Activated CD4-positive, alpha-beta memory T cell treated with anti-CD3 and anti-CD28 coated beads for 36 hours (primary cell): ENCODE measurements at regions of chr6 and their contacts with region 1.

Region 1: DNA sequence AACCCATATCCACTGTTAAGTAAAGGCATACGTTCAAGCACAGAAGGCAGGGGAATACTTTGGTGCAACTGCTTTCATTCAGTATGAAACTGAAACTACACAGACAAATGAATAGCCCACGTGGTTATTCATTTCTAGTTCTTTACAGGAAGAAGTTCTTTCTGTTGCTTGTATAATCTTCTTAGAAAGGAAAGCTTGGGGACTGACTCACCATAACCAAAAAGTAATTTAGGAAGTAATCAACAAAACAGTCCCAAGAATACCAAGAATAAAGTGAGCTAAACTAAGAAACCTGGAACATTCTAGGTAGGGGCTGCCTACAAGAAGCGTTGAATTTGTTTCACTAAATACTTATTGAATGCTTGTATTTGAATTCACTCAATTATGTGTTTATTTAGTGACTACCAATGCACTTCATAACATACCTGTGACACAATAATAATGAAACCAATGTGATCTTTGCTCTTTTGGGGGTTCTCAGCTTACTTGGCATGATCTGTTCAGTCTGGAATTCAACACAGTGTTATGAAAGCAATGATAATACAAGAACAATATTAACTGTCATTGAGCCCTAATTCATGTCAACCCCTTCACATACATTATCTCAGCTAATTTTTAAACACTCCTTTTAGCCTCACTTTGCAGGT is 25.1 kb upstream of the KIAA0408 start:
- DNase-seq: no peak
- H3K4me3 Mint-ChIP-seq: no peak overlapping the region
- H3K27ac Mint-ChIP-seq: peak overlapping the region; percentile 68
- H3K4me1 Mint-ChIP-seq: peaks cover 28% of the 10 kb centered on the region
- H3K27me3 Mint-ChIP-seq: no peaks in the 10 kb centered on the region

Region 2: DNA sequence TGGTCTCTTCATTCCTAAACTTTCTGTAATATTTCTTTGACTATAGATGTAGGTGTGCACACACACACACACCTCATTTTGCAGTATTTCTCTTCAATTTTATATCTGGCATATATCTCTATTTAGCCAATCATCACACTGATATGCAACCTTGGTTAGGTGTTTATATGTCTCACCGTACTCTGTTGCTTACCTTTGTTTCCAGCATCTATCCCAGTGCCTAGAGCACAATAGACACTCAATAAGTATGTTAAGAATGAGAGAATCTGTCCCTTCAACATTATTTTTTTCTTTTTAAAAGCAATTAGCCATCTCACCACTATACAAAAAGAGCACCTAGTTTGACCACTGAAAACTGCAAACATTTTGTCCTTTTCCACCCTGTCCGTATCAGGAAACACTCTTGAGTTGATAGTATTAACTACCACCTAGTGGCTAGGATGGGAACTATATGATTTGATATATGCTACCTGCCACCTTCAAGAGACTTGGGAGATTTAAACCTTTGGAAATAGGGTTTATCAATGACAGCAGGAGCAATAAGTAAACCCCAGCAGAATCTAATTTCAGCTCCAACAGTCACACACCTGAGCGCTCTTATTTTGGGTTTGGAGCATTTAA is 414.6 kb before region 1 on chr6:
- CTCF ChIA-PET with region 1: no interaction called
- POLR2A ChIA-PET with region 1: no interaction called
- intact Hi-C with region 1: no loop called
- DNase-seq: no peak
- H3K4me3 Mint-ChIP-seq: no peak overlapping the region
- H3K27ac Mint-ChIP-seq: no peak overlapping the region
- H3K4me1 Mint-ChIP-seq: no peaks in the 10 kb centered on the region
- H3K27me3 Mint-ChIP-seq: peaks cover 1% of the 10 kb centered on the region

Region 3: DNA sequence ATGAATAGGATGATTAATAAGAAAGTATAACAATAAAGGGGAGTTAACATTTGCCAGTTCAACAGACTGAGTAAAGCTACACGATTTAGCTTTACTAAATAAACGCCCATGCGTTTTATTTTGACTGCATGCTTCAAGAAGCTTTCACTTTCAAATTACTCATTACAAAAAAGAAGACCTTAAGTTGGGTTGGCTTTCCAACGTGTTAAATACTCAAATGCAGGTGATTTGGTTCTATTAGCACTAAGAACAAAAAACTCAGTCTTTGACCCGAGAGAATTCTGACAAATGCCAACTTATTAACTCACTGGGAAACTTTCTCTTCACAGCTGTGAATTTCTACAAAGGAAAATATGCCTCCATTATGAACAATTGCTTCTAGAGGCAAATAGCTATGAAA is 192.8 kb before region 1 on chr6:
- CTCF ChIA-PET with region 1: no interaction called
- POLR2A ChIA-PET with region 1: no interaction called
- intact Hi-C with region 1: loop called (anchors 1 kb)
- DNase-seq: no peak
- H3K4me3 Mint-ChIP-seq: no peak overlapping the region
- H3K27ac Mint-ChIP-seq: peak overlapping the region; percentile 49
- H3K4me1 Mint-ChIP-seq: peaks cover 45% of the 10 kb centered on the region
- H3K27me3 Mint-ChIP-seq: no peaks in the 10 kb centered on the region

Region 4: DNA sequence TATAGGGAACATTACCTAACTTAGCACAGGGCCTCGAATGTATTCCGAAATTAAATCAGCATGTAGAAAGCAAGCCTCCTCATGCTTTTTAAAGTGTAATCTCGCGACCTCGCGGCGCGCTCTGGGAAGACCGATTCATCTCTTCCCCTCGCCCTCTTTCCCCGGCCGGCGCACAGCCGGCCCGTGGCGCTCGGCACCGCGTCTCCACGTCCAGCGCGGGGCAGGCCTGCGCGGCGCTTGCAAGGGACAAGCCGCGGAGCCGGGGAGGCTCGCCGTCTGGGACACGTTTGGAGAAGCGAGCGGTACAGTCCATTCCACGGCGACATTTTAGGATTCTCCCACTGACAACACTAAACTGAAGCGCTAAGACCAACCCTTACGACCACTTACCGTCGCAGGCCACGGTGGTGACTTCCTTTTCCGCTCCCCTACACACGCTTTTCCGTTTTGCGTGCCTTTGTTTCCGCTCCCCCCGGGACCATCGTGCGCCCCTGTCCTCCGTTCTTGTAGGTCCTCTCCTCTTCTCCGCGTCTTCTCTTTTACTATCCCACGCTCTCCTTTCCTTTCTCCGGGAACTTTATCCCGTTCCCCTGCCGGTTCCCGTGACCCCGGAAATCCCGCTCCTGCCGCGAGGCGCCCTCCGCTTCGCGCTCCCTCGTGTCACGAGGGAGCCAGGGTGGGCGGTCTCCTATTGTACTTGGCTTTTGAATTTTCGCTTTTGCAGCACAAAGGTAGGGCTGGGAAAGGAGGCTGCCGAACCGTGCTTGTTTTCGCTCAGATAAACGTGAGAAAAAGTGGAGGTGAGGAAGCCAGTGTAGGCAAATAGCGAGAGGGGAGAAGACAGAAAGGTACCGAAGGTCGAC is 141.2 kb before region 1 on chr6 and contains the start of gene ECHDC1:
- CTCF ChIA-PET with region 1: no interaction called
- POLR2A ChIA-PET with region 1: no interaction called
- intact Hi-C with region 1: loop called (anchors 1 kb)
- DNase-seq: peak; percentile 83
- H3K4me3 Mint-ChIP-seq: no peak within 1 kb of the TSS
- H3K27ac Mint-ChIP-seq: no peak within 1 kb of the TSS
- H3K4me1 Mint-ChIP-seq: peaks cover 7% of the 10 kb centered on the region
- H3K27me3 Mint-ChIP-seq: no peaks in the 10 kb centered on the region
- total RNA-seq, gene ECHDC1: 42.9 to 43.7 TPM

Region 5: GRCh38 chr6:127383988-127384387 is 100.3 kb before region 1 on chr6:
- CTCF ChIA-PET with region 1: no interaction called
- POLR2A ChIA-PET with region 1: no interaction called
- intact Hi-C with region 1: no loop called
- DNase-seq: no peak
- H3K4me3 Mint-ChIP-seq: no peak overlapping the region
- H3K27ac Mint-ChIP-seq: no peak overlapping the region
- H3K4me1 Mint-ChIP-seq: no peaks in the 10 kb centered on the region
- H3K27me3 Mint-ChIP-seq: peaks cover 1% of the 10 kb centered on the region

Region 6: GRCh38 chr6:127570739-127571389 is 86.5 kb after region 1 on chr6:
- CTCF ChIA-PET with region 1: no interaction called
- POLR2A ChIA-PET with region 1: no interaction called
- intact Hi-C with region 1: loop called (anchors 1 kb)
- DNase-seq: no peak
- H3K4me3 Mint-ChIP-seq: no peak overlapping the region
- H3K27ac Mint-ChIP-seq: no peak overlapping the region
- H3K4me1 Mint-ChIP-seq: peaks cover 13% of the 10 kb centered on the region
- H3K27me3 Mint-ChIP-seq: no peaks in the 10 kb centered on the region

Region 7: DNA sequence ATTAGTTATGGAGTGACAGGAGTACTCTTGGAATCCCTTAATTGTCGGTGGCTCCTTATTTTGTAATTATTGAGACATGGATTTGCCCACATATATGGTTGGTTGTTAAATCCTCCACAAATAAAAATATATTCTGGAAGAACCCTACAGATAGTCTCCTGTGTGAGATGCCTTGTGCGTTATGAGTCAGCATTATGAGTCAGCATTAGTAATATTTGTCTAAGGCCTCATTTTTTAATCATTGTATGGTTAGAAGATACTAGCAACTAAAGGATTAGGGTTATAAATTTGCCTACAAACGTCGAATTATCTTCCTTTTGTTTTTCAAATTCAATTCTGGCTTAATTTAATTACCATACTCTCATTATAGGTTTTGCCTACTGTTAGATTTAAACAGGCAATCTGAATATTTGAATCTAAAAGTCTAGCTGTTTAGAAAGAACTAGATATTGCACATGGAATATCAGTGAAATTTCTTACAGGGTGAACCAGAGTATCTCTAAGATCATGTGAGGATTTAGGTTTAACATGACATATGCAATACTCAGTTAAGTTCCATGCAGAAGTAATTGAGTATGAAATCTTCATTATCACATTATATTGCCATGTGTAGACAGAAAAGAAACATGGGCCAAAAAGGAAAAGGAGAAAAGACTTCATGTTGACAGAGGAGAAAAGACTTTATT is 98.6 kb after region 1 on chr6:
- CTCF ChIA-PET with region 1: no interaction called
- POLR2A ChIA-PET with region 1: no interaction called
- intact Hi-C with region 1: no loop called
- DNase-seq: no peak
- H3K4me3 Mint-ChIP-seq: no peak overlapping the region
- H3K27ac Mint-ChIP-seq: no peak overlapping the region
- H3K4me1 Mint-ChIP-seq: peaks cover 8% of the 10 kb centered on the region
- H3K27me3 Mint-ChIP-seq: peaks cover 6% of the 10 kb centered on the region